HEK293T (cell line): ENCODE measurements at regions of chr1 and their contacts with region 1.

Region 1: GRCh38 chr1:168653567-168653966 is 75.4 kb downstream of the DPT start:
- DNase-seq: no peak

Region 2: DNA sequence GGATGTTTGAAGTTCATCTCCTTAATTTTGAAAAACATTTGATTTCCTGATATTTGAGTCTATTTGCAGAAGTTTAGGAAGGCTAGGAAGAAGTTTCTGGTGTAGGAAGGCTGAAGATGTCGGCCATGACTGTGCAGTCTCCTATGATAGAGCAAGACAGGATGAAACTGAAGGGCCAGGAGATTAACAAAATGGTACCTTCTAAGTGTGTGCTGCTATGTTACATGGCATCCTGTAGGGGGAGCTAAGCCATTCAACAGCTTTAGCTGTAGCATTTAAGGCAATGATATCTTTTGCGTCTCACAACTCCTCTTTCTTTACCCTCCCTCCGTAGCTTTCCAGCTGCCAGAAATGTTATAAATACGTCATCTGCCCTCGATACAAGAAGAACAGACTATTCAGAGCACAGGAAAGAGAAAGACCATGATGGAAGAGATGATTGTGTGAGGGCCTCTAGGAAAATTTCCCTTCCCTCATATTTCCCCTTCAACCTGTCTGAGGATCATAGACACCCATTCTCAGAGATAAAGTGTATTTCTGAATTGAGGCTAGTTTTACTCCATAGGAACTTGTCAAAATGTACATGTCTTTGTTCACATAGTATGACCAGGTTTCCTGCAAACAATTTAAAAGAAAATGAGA is 16.1 kb before region 1 on chr1:
- CTCF ChIA-PET with region 1: interaction called, 16 read pairs
- POLR2A ChIA-PET with region 1: no interaction called
- DNase-seq: peak; percentile 70